Activated T-helper 2 cell treated with anti-CD3 and anti-CD28 coated beads, Interferon-gamma antibody, Interleukin-2, Interleukin-4, amounts not matched to agents 10 μg/mL and 5 μg/mL and 100 μg/mL, durations not matched to agents 14 hours and 24 hours and 36 hours (primary cell): ENCODE measurements at regions of chrX and their contacts with region 1.

Region 1: DNA sequence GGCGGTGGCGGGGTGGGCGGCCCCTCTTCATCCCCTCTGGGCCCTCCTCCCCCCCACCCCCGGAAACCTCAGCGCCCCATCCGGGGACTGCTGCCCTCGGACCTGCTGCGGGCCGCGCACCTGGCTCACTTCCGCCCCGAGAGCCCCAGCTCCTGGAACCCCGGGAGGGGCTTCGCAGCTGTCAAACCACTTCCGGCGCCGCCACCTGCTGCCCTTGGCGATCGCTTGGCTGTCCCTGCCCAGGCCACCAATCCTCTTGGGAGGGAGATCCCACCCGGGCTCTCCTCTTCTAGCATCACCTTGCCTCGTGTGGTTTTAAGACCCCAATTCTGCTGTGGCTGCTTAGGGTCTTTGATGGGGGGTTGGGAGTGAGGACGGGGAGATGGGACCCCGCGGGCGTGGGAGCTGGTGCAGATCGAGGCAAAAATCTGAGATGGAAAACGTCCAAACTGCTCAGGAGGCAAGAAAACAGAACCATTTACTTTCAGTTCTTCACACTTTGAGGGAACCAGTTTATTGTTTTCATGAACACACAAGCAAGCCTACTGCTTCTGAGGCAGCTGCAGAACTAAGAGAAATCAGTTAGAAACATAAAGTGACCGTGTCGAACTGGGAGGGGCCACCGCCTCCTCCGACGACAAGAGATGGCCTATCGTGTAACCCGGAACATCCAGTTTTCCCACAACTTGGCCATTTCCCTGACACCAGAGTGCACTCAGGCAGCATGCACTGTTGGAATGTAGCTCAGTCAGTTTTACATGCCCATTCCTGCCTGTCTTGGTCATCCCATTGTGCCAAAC is 779 bp downstream of the MTMR1 start:
- DNase-seq: peak; percentile 63
- H3K4me3 Mint-ChIP-seq: peak overlapping the region; percentile 84
- H3K27ac Mint-ChIP-seq: peak overlapping the region; percentile 92
- H3K4me1 Mint-ChIP-seq: peaks cover 52% of the 10 kb centered on the region
- H3K27me3 Mint-ChIP-seq: no peaks in the 10 kb centered on the region

Region 2: GRCh38 chrX:149539283-149540130 is 1154.5 kb before region 1 on chrX:
- intact Hi-C with region 1: loop called (anchors 10 kb)
- DNase-seq: peak; percentile 83
- H3K4me3 Mint-ChIP-seq: peak overlapping the region; percentile 81
- H3K27ac Mint-ChIP-seq: peak overlapping the region; percentile 76
- H3K4me1 Mint-ChIP-seq: peaks cover 4% of the 10 kb centered on the region
- H3K27me3 Mint-ChIP-seq: no peaks in the 10 kb centered on the region

Region 3: DNA sequence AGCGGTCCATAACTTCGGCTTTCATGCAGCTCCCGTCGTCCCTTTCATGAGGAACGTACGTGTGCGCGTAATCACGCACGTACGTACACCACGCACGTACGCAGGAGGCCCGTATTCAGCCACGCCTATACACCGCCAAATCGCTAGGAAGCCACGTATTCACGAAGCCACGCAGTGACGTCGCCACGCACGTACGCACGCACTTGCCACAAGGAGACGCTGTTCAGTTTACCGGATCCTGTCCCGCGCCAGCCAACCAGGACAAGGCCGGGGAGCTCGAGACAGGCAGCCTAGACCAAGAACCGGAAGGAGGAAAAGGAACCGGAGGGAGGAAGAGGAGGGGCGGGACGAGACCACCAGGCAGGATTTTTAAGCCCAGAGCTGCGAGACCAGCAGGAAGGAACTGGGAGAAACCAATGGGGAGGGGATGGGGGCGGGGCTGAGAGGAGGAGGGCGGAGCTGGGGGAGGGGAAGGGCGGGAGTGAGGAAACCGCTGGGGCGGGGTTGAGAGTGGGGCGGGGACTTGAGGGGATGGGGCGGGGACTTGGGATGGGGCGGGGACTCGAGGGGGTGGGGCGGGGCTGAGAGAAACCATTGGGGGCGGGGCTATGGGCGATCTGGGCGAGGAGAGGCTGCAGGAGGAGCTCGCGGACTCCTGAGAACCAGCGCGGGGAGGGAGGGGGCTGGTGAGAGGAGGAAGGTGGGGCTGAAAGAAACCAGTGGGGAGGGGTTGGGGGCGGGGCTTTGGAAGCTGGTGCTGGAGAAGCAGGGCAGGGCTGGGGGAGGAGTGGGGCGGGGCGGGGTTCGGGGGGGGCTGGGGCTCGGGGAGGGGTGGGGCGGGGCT is 755.3 kb before region 1 on chrX and contains the start of gene EOLA2:
- intact Hi-C with region 1: loop called (anchors 10 kb)
- DNase-seq: peak; percentile 90
- H3K4me3 Mint-ChIP-seq: peak within 1 kb of the TSS; percentile 86
- H3K27ac Mint-ChIP-seq: peak within 1 kb of the TSS; percentile 99
- H3K4me1 Mint-ChIP-seq: peaks cover 1% of the 10 kb centered on the region
- H3K27me3 Mint-ChIP-seq: no peaks in the 10 kb centered on the region
- total RNA-seq, gene EOLA2: 45.1 and 45.2 TPM in 2 replicates

Region 4: DNA sequence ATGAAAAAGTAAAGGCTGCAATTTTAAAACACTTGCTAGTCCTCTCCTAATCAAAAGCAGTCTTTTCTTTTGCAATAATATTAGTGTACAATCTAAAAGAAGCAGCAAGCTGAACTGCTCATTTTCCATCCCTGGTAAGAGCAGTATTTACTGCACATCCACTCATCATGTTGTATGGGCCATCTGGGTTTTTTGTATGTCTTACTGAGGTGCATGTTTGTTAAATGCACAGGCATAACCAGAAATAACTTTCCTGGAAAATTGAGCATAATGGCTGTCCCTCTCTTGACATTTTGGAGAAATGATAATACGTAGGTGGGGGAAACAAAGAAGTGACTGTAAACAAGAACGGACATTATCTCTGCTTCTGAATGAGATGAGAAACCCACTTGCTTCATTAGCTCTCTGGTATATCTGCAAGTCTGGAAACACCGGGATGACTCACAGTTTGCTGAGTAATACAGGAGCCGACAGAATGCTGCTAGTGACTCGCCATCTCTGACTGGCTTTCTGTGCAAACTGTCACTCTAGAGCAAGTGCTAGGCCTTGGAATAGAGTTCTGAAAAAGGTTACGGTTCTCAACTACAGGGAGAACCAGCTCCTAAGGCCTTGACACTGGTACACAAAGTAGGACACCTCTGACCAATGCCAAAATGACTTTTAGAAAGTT is 211.3 kb before region 1 on chrX:
- intact Hi-C with region 1: loop called (anchors 5 kb)
- DNase-seq: peak; percentile 30
- H3K4me3 Mint-ChIP-seq: peak overlapping the region; percentile 75
- H3K27ac Mint-ChIP-seq: peak overlapping the region; percentile 99
- H3K4me1 Mint-ChIP-seq: peaks cover 55% of the 10 kb centered on the region
- H3K27me3 Mint-ChIP-seq: no peaks in the 10 kb centered on the region

Region 5: GRCh38 chrX:150704030-150704613 is 10.1 kb after region 1 on chrX:
- intact Hi-C with region 1: loop called (anchors 1 kb)
- DNase-seq: no peak
- H3K4me3 Mint-ChIP-seq: no peak overlapping the region
- H3K27ac Mint-ChIP-seq: peak overlapping the region; percentile 56
- H3K4me1 Mint-ChIP-seq: peaks cover 28% of the 10 kb centered on the region
- H3K27me3 Mint-ChIP-seq: no peaks in the 10 kb centered on the region